Prostate gland (tissue), 2 donors: ENCODE measurements at regions of chr6 and their contacts with region 1.

Region 1: GRCh38 chr6:158808941-158809678 is 10.1 kb downstream of the EZR start:
- DNase-seq: no peak
- H3K4me3 ChIP-seq: no peak overlapping the region
- H3K27ac ChIP-seq: peak overlapping the region; percentile 64 to 65
- H3K4me1 ChIP-seq: peaks cover 37% of the 10 kb centered on the region
- H3K27me3 ChIP-seq: no peaks in the 10 kb centered on the region
- CTCF ChIP-seq: no peak
- POLR2A ChIP-seq: no peak

Region 2: GRCh38 chr6:158762787-158763433 is 46.2 kb before region 1 on chr6:
- intact Hi-C with region 1: loop called (anchors 5 kb)
- DNase-seq: no peak
- H3K4me3 ChIP-seq: no peak overlapping the region
- H3K27ac ChIP-seq: no peak overlapping the region
- H3K4me1 ChIP-seq: no peaks in the 10 kb centered on the region
- H3K27me3 ChIP-seq: no peaks in the 10 kb centered on the region
- CTCF ChIP-seq: no peak
- POLR2A ChIP-seq: no peak